Esophagus squamous epithelium (tissue), 5 donors: ENCODE measurements at regions of chr2 and their contacts with region 1.

Region 1: GRCh38 chr2:1546023-1546591 is 132.8 kb downstream of the TPO start:
- DNase-seq: no peak
- H3K4me3 ChIP-seq: no peak overlapping the region
- H3K27ac ChIP-seq: no peak overlapping the region
- H3K4me1 ChIP-seq: peaks cover 6 to 18% (median 7%) of the 10 kb centered on the region in 3 donors
- H3K27me3 ChIP-seq: peaks cover 0 to 28% (median 0%) of the 10 kb centered on the region in 4 donors
- CTCF ChIP-seq: peak; percentile 34 to 88 (median 76)
- POLR2A ChIP-seq: no peak

Region 2: GRCh38 chr2:714005-714741 is 831.9 kb before region 1 on chr2:
- intact Hi-C with region 1: loop called (anchors 10 kb)
- DNase-seq: no peak
- H3K4me3 ChIP-seq: no peak overlapping the region
- H3K27ac ChIP-seq: no peak overlapping the region
- H3K4me1 ChIP-seq: peaks cover 0 to 4% (median 0%) of the 10 kb centered on the region in 3 donors
- H3K27me3 ChIP-seq: no peaks in the 10 kb centered on the region
- CTCF ChIP-seq: peak; percentile 22 to 71 (median 62)
- POLR2A ChIP-seq: no peak

Region 3: DNA sequence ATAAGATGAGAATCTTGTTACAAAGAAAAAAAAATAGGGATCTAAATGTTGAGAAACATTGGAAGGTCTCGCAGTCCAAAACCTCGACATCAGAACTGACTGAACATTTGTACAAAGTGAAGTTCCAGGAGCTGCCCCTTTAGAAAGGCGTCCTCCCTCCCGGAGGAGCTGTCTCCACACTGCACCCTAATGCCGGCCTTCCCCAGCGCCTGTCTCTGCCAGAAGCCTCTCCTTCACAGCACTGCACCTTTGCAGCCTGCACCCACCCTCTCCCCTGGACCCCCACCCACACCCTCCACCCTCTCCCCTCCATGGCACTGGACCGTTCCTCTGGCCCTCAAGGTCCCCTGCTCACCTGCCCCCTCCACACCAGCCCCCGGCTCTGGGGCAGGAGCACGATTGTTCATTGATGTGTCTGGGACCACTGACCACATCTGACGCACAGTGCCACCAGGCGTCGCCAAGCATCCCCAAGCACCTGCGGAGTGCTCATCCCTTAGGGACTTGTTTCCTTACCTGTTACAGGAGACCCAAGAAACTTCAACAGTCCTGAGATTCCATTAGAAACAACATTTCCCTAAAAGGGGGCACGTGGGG is 685.8 kb before region 1 on chr2:
- intact Hi-C with region 1: loop called (anchors 10 kb)
- DNase-seq: no peak
- H3K4me3 ChIP-seq: no peak overlapping the region
- H3K27ac ChIP-seq: no peak overlapping the region
- H3K4me1 ChIP-seq: no peaks in the 10 kb centered on the region
- H3K27me3 ChIP-seq: peaks cover 0 to 32% (median 0%) of the 10 kb centered on the region in 4 donors
- CTCF ChIP-seq: no peak
- POLR2A ChIP-seq: no peak